Tibial artery (tissue), 4 donors: ENCODE measurements at regions of chr10 and their contacts with region 1.

Region 1: DNA sequence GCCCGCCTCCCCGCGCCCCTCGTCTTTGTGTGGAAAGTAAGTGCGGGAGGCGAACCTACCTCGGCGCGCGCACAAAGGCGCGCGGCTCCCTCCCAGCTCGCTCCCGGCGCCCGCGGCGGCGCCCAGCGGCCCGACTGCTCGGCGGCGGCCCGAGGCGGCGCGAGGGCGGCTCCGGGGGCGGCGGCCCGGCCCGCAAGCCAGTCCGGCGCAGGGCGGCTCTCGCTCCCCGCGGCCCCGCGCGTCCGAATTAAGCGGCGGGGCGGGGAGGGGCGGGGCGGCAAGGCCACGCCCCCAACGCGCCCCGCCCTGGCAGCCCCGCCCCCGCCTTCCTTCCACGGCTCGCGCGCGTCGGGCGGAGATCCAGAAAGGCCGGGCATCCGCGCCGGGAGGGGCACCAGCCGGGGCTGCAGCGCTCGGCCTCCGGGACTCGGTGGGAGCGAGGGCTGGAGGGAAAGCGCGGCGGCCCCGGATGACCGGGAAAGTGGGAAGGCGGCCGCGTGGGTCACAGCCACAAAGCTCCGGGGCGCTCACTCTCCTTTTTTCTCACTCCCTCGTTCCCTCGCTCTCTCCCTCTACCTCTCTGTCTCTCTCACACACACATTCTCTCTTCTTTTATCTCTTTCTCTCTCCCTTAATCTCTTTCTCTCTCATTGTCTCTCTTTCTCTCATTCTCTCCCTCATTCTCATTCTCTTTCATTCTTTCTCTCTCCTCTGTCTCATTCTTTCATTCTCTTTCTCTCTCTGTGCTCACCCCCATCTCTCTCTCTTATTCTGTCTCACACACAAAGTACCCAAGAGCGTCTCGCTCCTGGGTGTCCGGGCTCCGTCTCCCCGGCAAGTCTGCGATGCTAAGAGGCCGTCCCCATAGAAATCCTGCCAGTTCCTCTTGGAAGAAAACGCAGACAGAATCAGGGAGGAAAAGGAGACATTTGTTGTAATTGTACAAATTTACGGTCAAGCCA is 170.2 kb downstream of the FAM107B start:
- DNase-seq: peak; percentile 79 to 92
- H3K4me3 ChIP-seq: peak overlapping the region; percentile 63 to 81
- H3K27ac ChIP-seq: peak overlapping the region; percentile 80 to 86
- H3K4me1 ChIP-seq: peaks cover 0 to 30% (median 11%) of the 10 kb centered on the region in 4 donors
- H3K27me3 ChIP-seq: no peaks in the 10 kb centered on the region
- CTCF ChIP-seq: no peak

Region 2: DNA sequence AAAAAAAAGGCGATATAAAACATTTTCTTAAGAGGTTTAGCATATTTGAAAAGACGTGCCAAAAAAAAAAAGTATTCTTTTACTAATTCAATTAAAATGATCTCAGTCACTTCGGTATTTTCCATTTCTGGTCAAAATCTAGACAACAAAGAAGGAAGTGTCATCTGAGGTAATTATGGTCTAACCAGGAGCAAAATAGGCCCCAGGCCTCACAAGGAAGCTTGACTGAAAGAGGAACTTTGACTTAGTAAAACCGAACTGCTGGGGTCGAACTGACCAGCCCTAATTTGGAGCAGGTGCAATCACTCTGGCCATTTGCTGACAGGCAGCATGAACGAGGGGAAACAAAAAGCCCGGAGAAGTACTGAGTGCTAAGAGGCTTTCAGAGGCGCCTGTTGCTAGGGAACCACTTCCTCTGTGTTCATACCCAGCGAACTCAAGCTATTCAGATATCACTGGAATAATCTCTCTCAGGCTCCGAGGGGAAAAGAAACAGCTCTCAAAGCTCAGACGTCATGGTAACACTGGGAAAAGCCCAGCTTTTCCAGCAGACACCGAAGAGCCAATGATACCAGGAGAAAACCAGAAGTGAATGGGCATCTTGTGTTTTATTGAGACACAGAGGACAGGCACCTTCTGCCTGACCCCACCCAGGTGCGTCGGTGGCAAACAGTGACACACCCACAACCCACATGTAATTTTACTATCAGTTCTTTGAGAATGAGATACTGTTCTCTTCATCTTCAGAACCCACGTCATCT is 43.7 kb after region 1 on chr10:
- intact Hi-C with region 1: loop called (anchors 5 kb)
- DNase-seq: peak; percentile 76 to 90
- H3K4me3 ChIP-seq: no peak overlapping the region
- H3K27ac ChIP-seq: peak overlapping the region; percentile 69 to 90
- H3K4me1 ChIP-seq: peaks cover 3 to 47% (median 14%) of the 10 kb centered on the region in 4 donors
- H3K27me3 ChIP-seq: no peaks in the 10 kb centered on the region
- CTCF ChIP-seq: no peak